ENCODE measurements at regions of chr17 and their contacts with region 1.

Region 1: DNA sequence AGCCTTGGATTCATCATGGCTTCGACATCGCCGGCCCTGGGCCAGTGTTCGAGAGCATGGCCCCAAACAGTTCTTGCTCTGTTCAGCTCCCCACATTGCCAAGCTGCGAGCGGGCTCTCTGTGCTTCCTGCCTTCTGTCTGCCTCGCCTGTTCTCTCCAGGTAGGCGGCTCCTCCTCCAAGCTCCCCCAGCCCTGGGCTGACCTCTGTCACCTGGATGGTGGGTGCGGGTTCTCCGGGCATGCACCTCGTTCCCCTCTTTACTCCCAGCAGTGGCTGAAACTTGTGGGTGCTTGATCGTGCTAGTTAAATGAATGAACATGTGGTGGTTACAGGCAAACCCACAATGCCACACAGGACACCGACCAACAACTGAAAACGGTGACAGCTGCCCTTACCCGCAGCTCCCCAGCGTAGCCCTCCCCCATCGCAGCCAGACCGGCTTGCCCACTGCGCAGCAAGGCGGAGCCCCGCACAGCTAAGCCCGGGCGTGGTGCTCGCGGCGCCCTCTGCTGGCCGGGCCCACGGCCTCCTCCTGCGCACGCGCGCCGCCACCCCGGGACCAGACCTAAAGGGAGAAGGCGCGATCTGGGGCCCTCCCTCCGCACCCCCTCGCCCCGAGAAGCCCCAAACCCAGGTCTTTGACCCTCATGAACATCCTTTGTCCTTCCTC is 23.0 kb upstream of the EIF1 start:
- DNase-seq: peak; percentile 89 to 100
- ATAC-seq: peak; percentile 72 to 91
- H3K4me3 ChIP-seq: peak overlapping the region; percentile 47
- H3K27ac ChIP-seq: peak overlapping the region; percentile 86 to 92
- H3K4me1 ChIP-seq: peaks cover 23% of the 10 kb centered on the region
- CTCF ChIP-seq: peak; percentile 98
- EP300 ChIP-seq: no peak
- POLR2A ChIP-seq: peak; percentile 74
- RAD21 ChIP-seq: peak in 1 of 2 experiments; percentile 46; a peak in 2 of 5 replicates

Region 2: GRCh38 chr17:40779181-40779909 is 886.4 kb before region 1 on chr17:
- CTCF ChIA-PET with region 1: interaction called, 12 read pairs
- POLR2A ChIA-PET with region 1: no interaction called
- DNase-seq: peak; percentile 45 to 53
- ATAC-seq: peak; percentile 93 to 94
- H3K4me3 ChIP-seq: peak overlapping the region; percentile 39
- H3K27ac ChIP-seq: peak overlapping the region in 1 of 2 experiments; percentile 62; a peak in 3 of 6 replicates
- H3K4me1 ChIP-seq: 0 out of 3 replicates have a peak, but pooled peaks cover 5% of the 10 kb centered on the region
- CTCF ChIP-seq: no peak
- EP300 ChIP-seq: no peak
- POLR2A ChIP-seq: no peak
- RAD21 ChIP-seq: no peak

Region 3: DNA sequence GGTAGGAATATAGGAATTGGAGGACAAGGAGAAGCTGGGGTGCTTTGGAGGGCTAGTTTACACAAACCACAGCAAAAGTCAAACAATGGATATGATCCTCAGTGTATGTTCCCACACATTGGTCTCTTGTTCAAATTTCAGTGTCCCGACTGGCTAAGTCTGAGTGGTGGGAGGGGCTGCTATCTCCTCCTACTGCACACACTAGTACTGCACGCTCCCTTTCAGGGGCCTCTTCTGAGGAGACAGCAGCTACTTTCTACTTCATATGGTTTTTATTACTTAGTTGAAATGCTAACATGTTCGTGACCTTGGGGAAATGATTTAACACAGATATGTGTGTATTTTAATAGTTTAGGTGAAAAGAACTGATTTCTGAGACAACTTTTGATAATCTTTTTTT is 824.5 kb before region 1 on chr17:
- CTCF ChIA-PET with region 1: interaction called, 418 read pairs
- POLR2A ChIA-PET with region 1: no interaction called
- DNase-seq: no peak
- ATAC-seq: peak in 1 of 2 experiments; percentile 47; a peak in 1 of 6 replicates
- H3K4me3 ChIP-seq: no peak overlapping the region
- H3K27ac ChIP-seq: no peak overlapping the region
- H3K4me1 ChIP-seq: no peaks in the 10 kb centered on the region
- CTCF ChIP-seq: no peak
- EP300 ChIP-seq: no peak
- POLR2A ChIP-seq: no peak
- RAD21 ChIP-seq: no peak

Region 4: DNA sequence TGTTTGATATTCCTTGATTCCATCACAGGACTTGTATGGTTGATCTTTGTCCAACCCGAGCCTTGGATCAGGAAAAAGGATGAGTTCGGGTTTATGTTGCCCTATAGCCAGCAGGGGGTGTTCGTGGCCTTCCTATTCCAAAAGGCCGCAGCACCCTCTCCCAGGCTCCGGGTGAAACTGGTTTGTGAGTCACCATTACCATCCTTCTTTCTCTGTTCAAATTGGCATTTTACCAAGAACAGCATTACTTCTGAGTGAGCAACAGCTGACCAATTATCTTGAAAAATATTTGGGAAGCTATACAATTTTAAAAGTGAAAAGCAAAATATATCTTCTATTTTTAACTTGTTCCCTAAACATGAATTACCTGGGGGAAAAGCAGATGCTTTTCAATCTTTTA is 756.4 kb before region 1 on chr17:
- CTCF ChIA-PET with region 1: interaction called, 164 read pairs
- POLR2A ChIA-PET with region 1: no interaction called
- DNase-seq: peak; percentile 91 to 92
- ATAC-seq: peak; percentile 91 to 95
- H3K4me3 ChIP-seq: no peak overlapping the region
- H3K27ac ChIP-seq: peak overlapping the region; percentile 62 to 65
- H3K4me1 ChIP-seq: peaks cover 31% of the 10 kb centered on the region
- CTCF ChIP-seq: peak; percentile 98
- EP300 ChIP-seq: no peak
- POLR2A ChIP-seq: no peak
- RAD21 ChIP-seq: peak; percentile 99 to 100

Region 5: GRCh38 chr17:41486809-41487720 is 178.6 kb before region 1 on chr17:
- CTCF ChIA-PET with region 1: interaction called, 30 read pairs
- POLR2A ChIA-PET with region 1: no interaction called
- DNase-seq: peak in 1 of 2 experiments; percentile 48
- ATAC-seq: peak in 1 of 2 experiments; percentile 78; a peak in 4 of 6 replicates
- H3K4me3 ChIP-seq: no peak overlapping the region
- H3K27ac ChIP-seq: no peak overlapping the region
- H3K4me1 ChIP-seq: no peaks in the 10 kb centered on the region
- CTCF ChIP-seq: peak; percentile 45
- EP300 ChIP-seq: no peak
- POLR2A ChIP-seq: no peak
- RAD21 ChIP-seq: peak; percentile 29 to 49; a peak in 2 of 5 replicates

Region 6: DNA sequence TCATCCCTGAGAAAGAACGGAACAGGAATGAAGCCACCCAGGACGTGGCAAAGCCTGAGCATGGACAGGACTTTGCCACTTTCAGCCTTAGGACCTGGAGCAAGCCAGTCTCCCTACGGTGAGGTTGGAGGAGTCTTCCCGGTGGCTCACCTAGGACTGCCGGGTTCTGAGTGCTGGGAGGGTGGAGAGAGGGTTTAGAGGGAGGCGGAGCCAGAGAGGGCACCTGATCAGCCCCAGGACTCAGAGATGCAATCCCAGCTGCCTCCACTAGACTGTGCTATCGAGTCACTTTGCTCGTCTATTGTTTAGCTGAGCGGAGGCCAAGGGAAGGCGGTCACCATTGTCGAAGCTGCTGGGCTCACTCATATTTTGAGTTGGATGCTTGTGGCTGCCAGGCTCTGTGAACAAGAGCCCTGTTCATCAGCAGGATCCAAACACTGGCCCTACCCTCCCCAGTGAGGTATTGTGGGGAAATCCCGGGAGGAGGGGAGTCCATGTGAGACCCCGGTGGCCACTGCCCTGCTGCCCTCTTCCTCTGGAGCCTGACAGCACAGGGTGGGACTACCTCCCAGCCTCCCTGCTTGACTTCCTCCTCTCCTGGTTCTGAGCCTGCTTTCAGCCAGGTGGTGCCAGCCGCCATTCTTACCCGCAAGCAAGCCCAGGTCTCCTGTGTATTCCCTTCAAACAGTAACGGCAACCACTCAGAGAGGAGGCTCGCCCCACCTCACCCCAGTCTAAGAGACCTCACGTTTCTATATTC is 86.0 kb before region 1 on chr17:
- CTCF ChIA-PET with region 1: interaction called, 13 read pairs
- POLR2A ChIA-PET with region 1: no interaction called
- DNase-seq: peak; percentile 87 to 98
- ATAC-seq: peak; percentile 88 to 96
- H3K4me3 ChIP-seq: no peak overlapping the region; the same call in 2 of the 3 replicates
- H3K27ac ChIP-seq: peak overlapping the region; percentile 25 to 37; a peak in 3 of 6 replicates
- H3K4me1 ChIP-seq: peaks cover 6% of the 10 kb centered on the region
- CTCF ChIP-seq: peak; percentile 69
- EP300 ChIP-seq: no peak
- POLR2A ChIP-seq: no peak
- RAD21 ChIP-seq: peak; percentile 64 to 81

Region 7: DNA sequence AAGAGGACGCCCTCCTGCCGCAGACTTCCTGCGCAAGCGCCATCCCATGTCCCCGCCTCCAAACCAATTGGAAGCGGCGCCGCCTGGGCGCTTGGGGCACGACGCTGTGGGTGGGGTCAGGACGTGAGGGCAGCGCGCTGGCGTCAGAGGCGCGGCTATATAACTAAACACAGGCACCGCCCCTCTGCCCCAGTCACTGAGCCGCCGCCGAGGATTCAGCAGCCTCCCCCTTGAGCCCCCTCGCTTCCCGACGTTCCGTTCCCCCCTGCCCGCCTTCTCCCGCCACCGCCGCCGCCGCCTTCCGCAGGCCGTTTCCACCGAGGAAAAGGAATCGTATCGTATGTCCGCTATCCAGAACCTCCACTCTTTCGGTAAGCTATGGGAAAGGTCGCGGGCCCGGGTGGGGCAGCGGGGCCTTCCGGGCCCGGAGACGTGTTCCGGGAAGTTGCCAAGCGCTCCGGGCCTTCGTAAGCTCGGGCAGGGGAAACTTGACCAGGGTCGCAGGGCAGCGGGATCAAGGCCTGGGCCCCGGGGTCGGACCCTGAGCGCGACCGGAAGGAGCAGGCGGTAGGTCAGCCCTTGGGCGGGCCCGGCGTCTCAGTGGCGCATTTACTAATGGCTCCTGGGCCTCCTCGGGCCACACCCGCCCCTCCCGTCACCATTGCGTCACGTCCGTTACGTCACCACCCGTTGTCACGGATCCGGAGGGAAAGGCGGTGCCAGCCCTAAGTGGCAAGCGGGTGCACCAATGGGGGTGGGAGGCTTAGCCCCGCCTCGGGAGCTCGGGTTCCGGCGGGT is 23.2 kb after region 1 on chr17 and contains the start of gene EIF1:
- CTCF ChIA-PET with region 1: interaction called, 329 read pairs
- POLR2A ChIA-PET with region 1: interaction called, 19 read pairs
- DNase-seq: peak; percentile 98 to 100
- ATAC-seq: peak; percentile 71 to 83
- H3K4me3 ChIP-seq: peak within 1 kb of the TSS; percentile 93
- H3K27ac ChIP-seq: peak within 1 kb of the TSS; percentile 95 to 98
- H3K4me1 ChIP-seq: peaks cover 29% of the 10 kb centered on the region
- CTCF ChIP-seq: no peak
- EP300 ChIP-seq: peak in 1 of 2 experiments; percentile 52; a peak in 1 of 5 replicates
- POLR2A ChIP-seq: peak; percentile 92
- RAD21 ChIP-seq: no peak
- polyA plus RNA-seq, gene EIF1: 873 and 1,224 TPM in 2 replicates

Region 8: DNA sequence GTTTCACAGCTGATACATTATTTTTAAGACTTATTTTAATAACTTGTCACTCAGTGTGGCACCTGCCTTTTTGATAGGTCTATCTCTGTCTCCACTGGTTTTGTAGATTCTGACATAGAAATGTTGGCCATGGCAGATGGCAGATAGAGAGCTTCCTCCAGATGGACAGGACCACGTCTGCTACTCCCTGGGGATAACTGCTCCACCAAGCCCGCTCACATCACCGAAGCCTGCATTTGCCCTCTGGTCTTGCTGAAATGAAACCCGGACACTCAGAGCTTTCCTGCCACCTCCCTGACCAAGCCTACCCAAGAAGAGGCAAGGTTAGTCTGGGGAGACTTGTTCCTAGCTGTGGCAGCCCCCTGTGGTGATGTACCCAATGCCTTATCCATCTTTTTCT is 85.2 kb after region 1 on chr17:
- CTCF ChIA-PET with region 1: no interaction called
- POLR2A ChIA-PET with region 1: no interaction called
- DNase-seq: no peak
- ATAC-seq: no peak
- H3K4me3 ChIP-seq: no peak overlapping the region
- H3K27ac ChIP-seq: no peak overlapping the region
- H3K4me1 ChIP-seq: no peaks in the 10 kb centered on the region
- CTCF ChIP-seq: no peak
- EP300 ChIP-seq: no peak
- POLR2A ChIP-seq: no peak
- RAD21 ChIP-seq: no peak

Measured in A549 (cell line).